Ascending aorta (tissue), 2 donors: ENCODE measurements at regions of chr19 and their contacts with region 1.

Region 1: DNA sequence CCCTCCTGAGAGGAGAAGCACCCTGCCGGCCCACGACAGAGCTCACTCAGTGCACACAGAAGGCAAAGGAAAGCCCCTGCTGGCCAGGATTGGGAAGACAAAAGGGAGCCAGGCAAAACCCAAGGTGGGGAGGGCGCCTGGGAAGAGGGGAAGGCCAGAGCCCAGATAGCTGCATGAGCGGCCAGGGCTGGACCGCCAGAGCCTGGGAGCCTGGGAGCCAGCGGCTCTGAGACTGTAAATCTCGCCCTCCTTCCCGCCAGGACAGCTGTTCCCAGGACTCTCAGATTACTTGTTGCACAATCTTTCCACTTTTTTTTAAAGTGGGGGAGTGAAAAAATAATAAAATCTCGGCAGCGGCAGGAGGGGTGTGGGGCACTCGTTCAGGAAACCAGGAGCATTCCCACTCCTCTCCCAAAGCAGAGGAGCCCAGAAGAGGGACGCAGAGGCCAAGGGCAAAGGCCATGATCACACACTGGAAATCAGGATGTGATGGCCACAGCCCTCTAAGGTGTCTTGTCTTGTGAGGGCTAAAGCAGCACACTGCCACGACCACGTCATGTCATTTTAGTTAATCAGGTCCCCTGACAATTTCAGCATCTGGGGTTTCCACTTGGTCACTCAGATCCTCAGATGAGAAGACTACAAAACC is 19.6 kb upstream of the EPHX3 start:
- DNase-seq: peak; percentile 57 to 94
- H3K4me3 ChIP-seq: peak overlapping the region; percentile 37 to 49
- H3K27ac ChIP-seq: peak overlapping the region; percentile 96 to 99
- H3K4me1 ChIP-seq: peaks cover 39 to 64% of the 10 kb centered on the region in 2 donors
- H3K27me3 ChIP-seq: no peaks in the 10 kb centered on the region
- CTCF ChIP-seq: peak; percentile 53 to 66 (median 54)

Region 2: DNA sequence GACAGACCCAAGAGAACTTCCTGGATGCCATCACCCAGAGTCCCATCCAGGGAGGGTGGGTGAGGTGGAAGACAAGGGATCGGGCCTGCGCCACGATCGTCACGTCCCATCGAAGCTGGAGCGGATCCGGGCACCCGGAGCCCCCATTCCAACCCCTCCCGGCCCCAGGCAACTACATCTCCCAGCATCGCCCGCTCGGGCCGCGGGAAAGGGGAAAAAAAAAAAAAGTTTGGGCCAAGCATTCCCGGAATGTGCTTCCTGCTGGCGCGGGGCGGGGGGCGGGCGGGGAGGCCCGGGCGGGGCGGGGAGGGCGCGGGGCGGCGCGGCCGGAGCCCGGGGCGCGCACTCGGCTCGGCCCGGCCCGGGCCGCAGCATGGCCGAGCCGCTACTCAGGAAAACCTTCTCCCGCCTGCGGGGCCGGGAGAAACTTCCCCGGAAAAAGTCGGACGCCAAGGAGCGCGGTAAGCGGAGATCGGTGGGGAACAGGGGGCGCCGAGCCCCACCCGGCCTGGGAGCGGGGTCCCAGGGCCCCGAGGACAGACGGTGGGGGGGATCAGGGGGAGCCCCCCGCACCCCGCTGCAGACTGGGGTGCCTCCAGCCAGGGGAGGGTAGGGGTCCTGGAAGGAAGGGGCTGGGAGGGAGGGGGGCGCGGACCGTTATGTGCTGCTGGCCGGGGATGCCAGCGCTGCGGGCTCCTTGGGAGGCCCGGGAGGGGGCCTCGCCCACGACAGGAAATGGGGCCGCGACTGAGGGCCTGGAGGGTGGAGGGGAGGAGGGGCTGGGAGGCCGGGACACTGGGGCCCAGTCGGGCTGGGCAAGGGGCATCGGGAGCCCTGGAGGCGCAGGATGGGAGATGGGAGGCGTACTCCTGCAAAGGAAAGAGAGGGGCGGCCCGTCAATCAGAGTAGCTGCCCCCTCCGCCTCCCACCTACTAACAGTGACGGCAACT is 144.5 kb before region 1 on chr19 and contains the start of gene SYDE1:
- intact Hi-C with region 1: loop called (anchors 2 kb)
- DNase-seq: peak in 1 of 2 donors; percentile 78
- H3K4me3 ChIP-seq: peak within 1 kb of the TSS; percentile 84 to 95
- H3K27ac ChIP-seq: peak within 1 kb of the TSS; percentile 92 to 97
- H3K4me1 ChIP-seq: peaks cover 4 to 10% of the 10 kb centered on the region in 2 donors
- H3K27me3 ChIP-seq: no peaks in the 10 kb centered on the region
- CTCF ChIP-seq: no peak
- total RNA-seq, gene SYDE1: 104 TPM

Region 3: GRCh38 chr19:15177269-15178116 is 74.4 kb before region 1 on chr19:
- intact Hi-C with region 1: loop called (anchors 1 kb)
- DNase-seq: peak in 1 of 2 donors; percentile 89
- H3K4me3 ChIP-seq: peak overlapping the region; percentile 28 to 51
- H3K27ac ChIP-seq: peak overlapping the region; percentile 55 to 72
- H3K4me1 ChIP-seq: no peaks in the 10 kb centered on the region
- H3K27me3 ChIP-seq: no peaks in the 10 kb centered on the region
- CTCF ChIP-seq: peak; percentile 95 to 99 (median 95)

Region 4: GRCh38 chr19:15210323-15210781 is 41.5 kb before region 1 on chr19:
- intact Hi-C with region 1: loop called (anchors 5 kb)
- DNase-seq: peak; percentile 75 to 94
- H3K4me3 ChIP-seq: no peak overlapping the region
- H3K27ac ChIP-seq: peak overlapping the region; percentile 71 to 81
- H3K4me1 ChIP-seq: peaks cover 6 to 37% of the 10 kb centered on the region in 2 donors
- H3K27me3 ChIP-seq: no peaks in the 10 kb centered on the region
- CTCF ChIP-seq: no peak

Region 5: DNA sequence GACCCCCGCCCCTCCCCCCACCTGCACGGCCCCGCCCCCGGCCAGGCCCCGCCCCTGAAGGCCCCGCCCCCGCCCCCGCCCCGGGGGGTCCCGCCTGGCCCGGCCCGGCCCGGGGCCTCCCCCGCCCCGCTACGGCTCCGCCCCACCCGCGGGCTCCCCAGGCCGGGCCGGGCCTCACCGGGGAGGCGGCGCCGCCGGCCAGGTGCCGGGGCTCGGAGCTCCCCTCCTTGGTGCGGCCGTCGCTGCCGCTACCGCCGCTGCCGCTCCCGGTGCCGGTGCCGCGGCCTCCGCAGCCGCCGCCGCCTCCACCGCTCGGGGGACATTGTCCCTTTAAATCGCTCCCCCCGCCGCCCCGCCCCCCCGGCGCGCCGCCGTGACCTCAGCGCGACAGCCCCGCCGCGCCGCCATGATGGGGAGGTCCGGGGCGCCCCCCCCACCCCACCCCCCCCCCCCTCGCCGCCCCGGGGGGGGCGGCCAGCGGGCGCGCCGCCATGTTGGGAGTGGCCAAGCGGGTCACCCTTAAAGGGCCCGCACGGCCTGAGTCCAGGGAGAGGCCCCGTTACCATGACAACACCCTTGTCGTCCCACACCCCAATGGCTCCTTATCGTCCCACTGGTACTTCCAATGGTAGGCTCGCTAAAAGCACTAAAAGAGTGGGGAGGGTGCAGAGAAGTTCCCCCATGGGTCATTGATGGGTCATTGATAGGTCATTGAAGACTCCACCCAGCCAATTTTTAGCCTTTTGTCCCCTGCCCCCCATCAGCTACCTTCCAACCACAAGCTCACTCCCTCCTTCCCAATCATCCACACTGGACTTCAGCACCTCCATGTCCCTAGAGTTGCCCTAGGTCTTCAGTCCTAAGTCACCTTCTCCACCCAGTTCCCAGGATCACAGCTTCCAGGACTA is 198.0 kb after region 1 on chr19 and contains the start of gene WIZ:
- intact Hi-C with region 1: loop called (anchors 5 kb)
- DNase-seq: peak; percentile 43 to 94
- H3K4me3 ChIP-seq: peak within 1 kb of the TSS; percentile 53 to 89
- H3K27ac ChIP-seq: peak within 1 kb of the TSS; percentile 64 to 86
- H3K4me1 ChIP-seq: peaks cover 17 to 36% of the 10 kb centered on the region in 2 donors
- H3K27me3 ChIP-seq: no peaks in the 10 kb centered on the region
- CTCF ChIP-seq: no peak
- total RNA-seq, gene WIZ: 90.4 TPM